Mammary epithelial cell (primary cell): ENCODE measurements at regions of chr6 and their contacts with region 1.

Region 1: DNA sequence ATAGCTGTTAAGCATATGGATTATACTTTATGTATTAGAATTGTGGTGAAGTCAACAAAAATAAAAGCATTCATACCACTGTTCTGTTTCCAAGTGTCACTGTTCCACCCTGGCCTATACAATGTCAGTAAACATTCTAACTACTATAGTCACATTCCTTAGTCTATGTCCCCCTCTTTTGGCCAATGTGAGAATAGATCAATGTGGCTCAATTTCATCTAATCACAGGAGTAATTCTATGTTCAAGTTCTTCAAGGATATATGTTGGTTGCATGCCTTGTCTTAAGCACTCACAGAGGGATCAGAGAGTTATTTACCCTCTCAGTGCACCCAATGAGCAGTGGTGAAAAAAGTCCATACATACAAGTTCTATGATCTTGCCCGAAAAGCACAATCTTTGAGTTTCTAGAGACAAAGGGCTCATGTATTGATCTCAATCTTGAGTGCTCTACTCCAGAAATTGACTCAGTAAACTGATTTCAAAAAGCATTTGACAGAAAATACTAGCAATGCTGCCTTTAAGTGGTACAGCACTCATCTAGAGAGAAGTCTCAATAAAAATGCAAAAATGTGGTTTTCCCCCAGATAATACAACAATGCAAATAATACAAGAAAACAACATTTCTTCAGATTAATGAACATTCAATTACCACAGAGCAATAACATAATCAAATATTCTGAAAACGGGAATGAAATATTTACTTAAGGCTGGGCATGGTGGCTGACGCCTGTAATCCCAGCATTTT is 16.5 kb downstream of the SMLR1 start:
- DNase-seq: peak; percentile 23
- H3K4me3 ChIP-seq: no peak overlapping the region
- H3K27ac ChIP-seq: no peak overlapping the region
- H3K4me1 ChIP-seq: no peaks in the 10 kb centered on the region
- H3K27me3 ChIP-seq: no peaks in the 10 kb centered on the region
- CTCF ChIP-seq: peak; percentile 36 to 60

Region 2: GRCh38 chr6:130037207-130037811 is 806.4 kb before region 1 on chr6:
- CTCF ChIA-PET with region 1: no interaction called
- dilution Hi-C with region 1: no loop called
- in situ Hi-C with region 1: no loop called
- intact Hi-C with region 1: loop called (anchors 2 kb)
- DNase-seq: no peak
- H3K4me3 ChIP-seq: no peak overlapping the region
- H3K27ac ChIP-seq: no peak overlapping the region
- H3K4me1 ChIP-seq: no peaks in the 10 kb centered on the region
- H3K27me3 ChIP-seq: no peaks in the 10 kb centered on the region
- CTCF ChIP-seq: peak; percentile 50 to 69

Region 3: DNA sequence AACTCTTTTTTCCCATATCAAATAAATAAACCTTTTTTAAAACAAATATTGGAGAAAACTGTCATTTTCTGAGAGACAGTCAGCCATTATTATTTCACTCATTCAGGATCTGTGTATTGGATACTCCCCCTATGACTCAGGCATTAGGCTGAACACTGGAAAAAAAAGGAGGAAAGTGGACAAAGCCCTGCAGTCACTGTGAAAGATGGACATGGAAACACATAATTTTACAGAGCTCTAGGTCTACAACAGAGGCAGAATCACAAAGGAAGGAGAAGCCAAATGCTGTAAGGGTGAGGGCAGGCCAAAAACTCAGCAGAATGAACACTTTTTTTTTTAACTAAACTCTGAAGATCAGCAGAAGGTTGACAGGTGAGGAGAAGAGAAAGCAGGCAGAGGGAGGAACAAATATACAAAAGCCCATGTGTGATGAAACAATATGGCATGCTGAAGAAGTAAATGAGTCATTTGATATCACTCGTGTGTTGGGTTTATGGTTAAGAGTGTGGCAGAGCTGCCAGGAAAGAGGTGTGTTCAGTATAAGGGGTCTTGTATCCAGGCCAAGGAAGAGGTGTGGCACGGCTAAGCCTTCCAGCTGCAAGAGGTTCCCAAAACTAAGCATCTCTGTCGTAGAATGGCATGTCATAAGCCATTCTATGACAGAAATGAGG is 180.2 kb after region 1 on chr6:
- CTCF ChIA-PET with region 1: no interaction called
- dilution Hi-C with region 1: no loop called
- in situ Hi-C with region 1: no loop called
- intact Hi-C with region 1: no loop called
- DNase-seq: peak; percentile 80
- H3K4me3 ChIP-seq: peak overlapping the region in 2 of 3 experiments; percentile 12 to 26
- H3K27ac ChIP-seq: peak overlapping the region; percentile 50
- H3K4me1 ChIP-seq: peaks cover 11% of the 10 kb centered on the region
- H3K27me3 ChIP-seq: no peaks in the 10 kb centered on the region
- CTCF ChIP-seq: no peak